Ascending aorta (tissue), 2 donors: ENCODE measurements at regions of chr13 and their contacts with region 1.

Region 1: DNA sequence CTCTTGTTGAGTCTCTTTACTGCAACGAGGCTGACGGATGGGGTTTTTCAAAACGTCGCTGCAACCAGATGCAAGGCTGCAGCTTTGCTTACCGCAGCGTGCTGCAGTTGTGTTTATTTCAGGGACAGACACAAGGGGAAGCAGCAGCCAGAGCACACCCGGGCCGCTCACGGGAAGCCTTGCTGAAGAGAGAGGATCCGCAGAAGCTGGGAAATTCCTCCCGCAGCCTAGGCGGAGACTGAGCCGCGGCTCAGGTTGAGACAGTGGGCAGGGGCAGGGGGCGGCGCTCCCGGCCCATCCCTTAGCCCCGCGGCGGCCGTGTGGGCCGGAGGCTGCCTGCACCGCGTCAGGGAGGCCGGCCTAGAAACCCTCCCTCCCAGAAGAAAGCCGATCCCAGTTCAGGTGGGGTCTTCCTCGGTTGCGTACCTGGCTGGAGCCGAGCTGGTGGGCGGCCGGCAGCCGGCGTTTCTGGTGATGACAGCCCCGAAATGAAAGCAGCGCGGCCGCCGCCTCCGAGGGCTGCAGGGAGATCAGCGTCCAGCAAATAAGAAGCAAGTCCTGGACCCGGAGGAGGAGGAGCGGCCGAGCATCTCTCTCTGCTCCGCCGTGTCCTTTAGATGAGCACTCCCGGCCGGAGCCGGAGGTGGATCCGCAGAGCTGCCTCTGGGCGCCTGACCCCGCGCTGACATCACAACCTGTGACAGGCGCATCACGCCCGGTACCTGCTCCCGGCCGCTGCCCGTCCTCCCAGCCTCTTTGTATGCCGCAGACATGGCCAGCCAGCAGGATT is at the start of gene FRY:
- DNase-seq: peak; percentile 20 to 74
- H3K4me3 ChIP-seq: peak within 1 kb of the TSS; percentile 65 to 95
- H3K27ac ChIP-seq: peak within 1 kb of the TSS; percentile 38 to 82
- H3K4me1 ChIP-seq: peaks cover 0 to 8% of the 10 kb centered on the region in 2 donors
- H3K27me3 ChIP-seq: no peaks in the 10 kb centered on the region
- CTCF ChIP-seq: peak in 1 of 3 experiments; percentile 29
- total RNA-seq, gene FRY: 115 TPM

Region 2: GRCh38 chr13:32105653-32106313 is 74.6 kb after region 1 on chr13:
- intact Hi-C with region 1: loop called (anchors 2 kb)
- DNase-seq: no peak
- H3K4me3 ChIP-seq: no peak overlapping the region
- H3K27ac ChIP-seq: no peak overlapping the region
- H3K4me1 ChIP-seq: no peaks in the 10 kb centered on the region
- H3K27me3 ChIP-seq: no peaks in the 10 kb centered on the region
- CTCF ChIP-seq: no peak

Region 3: GRCh38 chr13:32164622-32165268 is 133.5 kb after region 1 on chr13:
- intact Hi-C with region 1: loop called (anchors 5 kb)
- DNase-seq: no peak
- H3K4me3 ChIP-seq: no peak overlapping the region
- H3K27ac ChIP-seq: peak overlapping the region; percentile 37 to 71
- H3K4me1 ChIP-seq: peaks cover 0 to 10% of the 10 kb centered on the region in 2 donors
- H3K27me3 ChIP-seq: no peaks in the 10 kb centered on the region
- CTCF ChIP-seq: peak in 2 of 3 experiments; percentile 30 to 32

Region 4: GRCh38 chr13:32205431-32206096 is 174.3 kb after region 1 on chr13:
- intact Hi-C with region 1: loop called (anchors 5 kb)
- DNase-seq: no peak
- H3K4me3 ChIP-seq: no peak overlapping the region
- H3K27ac ChIP-seq: no peak overlapping the region
- H3K4me1 ChIP-seq: peaks cover 0 to 12% of the 10 kb centered on the region in 2 donors
- H3K27me3 ChIP-seq: no peaks in the 10 kb centered on the region
- CTCF ChIP-seq: no peak